ENCODE measurements at regions of chr22 and their contacts with region 1.

Region 1: DNA sequence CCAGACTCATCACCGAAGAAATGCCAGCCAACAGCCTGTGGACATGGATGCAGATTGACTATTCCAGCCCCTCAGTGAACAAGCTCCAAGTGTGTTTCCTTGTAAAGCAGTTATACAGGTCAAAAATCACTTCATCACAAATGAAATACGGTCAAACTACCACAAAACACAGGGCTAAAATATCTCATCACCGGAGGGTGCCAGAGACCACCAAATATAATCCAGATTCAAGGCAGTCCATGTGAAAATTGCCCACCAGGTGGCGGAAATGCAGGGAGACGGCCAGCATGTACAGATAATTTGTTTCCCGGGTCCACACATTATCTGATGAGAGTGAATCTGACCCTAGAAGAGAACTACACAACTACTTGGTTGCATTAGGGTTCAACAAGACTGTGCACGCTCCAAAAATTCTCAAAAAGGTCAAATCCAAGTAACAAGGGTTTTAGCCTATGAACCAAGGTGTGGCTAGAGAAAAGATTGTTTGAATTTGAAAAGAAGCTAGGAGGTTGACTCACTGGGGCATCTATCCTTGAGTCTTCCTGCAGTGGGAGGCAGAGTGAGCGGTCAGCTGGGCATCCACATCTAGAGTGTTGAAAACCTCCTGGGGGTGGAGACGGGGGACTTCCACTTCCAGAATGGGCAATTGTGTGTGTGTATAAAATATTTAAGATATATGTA is 71.7 kb downstream of the IGLL5 start:
- DNase-seq: peak; percentile 64 to 88
- ATAC-seq: peak; percentile 79

Region 2: DNA sequence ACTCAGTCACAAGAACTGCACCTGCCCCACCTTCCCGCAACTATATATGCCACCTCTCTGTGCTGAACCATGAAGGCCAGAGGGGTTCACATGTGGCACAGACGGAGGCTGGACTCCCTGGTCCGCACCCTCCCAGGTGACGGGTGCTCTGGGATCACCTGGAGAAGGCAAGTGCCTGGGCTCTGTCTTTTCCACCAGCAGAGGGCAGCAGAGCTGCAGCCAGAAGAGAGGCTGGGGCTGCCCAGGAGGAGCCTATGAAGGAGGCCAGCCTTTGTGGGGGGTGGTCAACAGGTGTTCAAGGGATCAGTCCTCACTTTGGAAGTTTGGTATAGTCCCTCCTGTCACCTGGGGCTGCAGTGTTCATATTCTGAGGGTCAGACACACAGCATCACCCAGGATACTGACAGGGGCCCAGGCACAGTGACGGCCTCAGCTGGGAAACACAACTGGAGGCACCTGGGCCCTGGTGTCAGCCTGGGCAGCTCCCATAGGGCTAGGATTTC is 110.9 kb before region 1 on chr22:
- intact Hi-C with region 1: loop called in 1 of 2 experiments (anchors 5 kb)
- DNase-seq: peak; percentile 56 to 83
- ATAC-seq: peak; percentile 94

Region 3: GRCh38 chr22:22916215-22916951 is 42.9 kb before region 1 on chr22:
- intact Hi-C with region 1: no loop called
- DNase-seq: no peak
- ATAC-seq: no peak

Region 4: DNA sequence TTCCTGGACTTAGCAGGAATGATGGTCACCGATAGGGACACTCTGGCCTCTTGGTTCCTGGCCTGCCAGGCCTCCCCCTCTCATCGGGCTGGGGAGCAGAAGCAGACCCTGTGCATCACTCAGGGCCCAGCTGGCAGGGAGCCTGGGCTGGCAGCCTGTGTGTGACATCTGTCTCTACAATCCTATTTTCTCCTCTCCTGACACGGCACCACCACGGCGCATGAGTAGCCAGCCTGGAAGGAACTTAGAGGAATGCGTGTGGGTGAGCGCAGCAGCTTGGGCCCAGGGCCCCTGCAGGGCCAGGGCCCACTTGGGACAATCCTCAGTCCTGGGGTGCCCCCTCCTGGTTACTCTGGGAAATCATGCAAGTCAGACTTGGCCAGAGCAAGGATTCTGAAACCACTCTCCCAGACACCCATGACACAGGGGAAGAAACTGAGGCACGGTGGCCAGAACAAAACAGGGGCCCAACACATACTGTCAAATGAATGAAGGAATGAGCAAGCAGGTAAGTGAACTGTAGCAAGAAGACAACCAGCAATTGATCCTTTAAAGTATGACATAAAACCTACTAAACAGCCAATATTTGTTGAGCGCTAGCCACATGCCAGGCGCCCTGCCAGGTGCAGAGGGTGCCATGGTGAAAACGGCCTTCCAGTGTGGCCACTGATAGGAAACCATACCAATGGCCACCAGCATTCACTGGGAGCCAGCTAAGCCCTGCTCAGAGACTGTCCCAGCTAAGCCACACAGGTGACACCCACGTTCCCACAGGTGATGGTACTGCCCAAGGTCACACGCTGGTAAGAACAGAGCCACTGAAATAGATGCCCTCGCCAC is 169.2 kb after region 1 on chr22:
- intact Hi-C with region 1: loop called (anchors 2 to 5 kb)
- DNase-seq: peak; percentile 54 to 79
- ATAC-seq: peak; percentile 90

Region 5: GRCh38 chr22:24011735-24012068 is 1052.4 kb after region 1 on chr22:
- intact Hi-C with region 1: no loop called
- DNase-seq: no peak
- ATAC-seq: peak; percentile 39